A673 (cell line): ENCODE measurements at regions of chr22 and their contacts with region 1.

Region 1: GRCh38 chr22:16917144-16918003 is 90.6 kb downstream of the GAB4 start:
- DNase-seq: peak; percentile 78
- H3K4me3 ChIP-seq: no peak overlapping the region
- H3K27ac ChIP-seq: no peak overlapping the region
- H3K4me1 ChIP-seq: no peaks in the 10 kb centered on the region
- H3K27me3 ChIP-seq: peaks cover 31% of the 10 kb centered on the region
- CTCF ChIP-seq: peak; percentile 82

Region 2: GRCh38 chr22:16955678-16956210 is 38.4 kb after region 1 on chr22:
- CTCF ChIA-PET with region 1: no interaction called
- POLR2A ChIA-PET with region 1: no interaction called
- intact Hi-C with region 1: loop called (anchors 5 kb)
- DNase-seq: no peak
- H3K4me3 ChIP-seq: no peak overlapping the region
- H3K27ac ChIP-seq: no peak overlapping the region
- H3K4me1 ChIP-seq: no peaks in the 10 kb centered on the region
- H3K27me3 ChIP-seq: no peaks in the 10 kb centered on the region
- CTCF ChIP-seq: no peak

Region 3: GRCh38 chr22:17057959-17058814 is 140.8 kb after region 1 on chr22:
- CTCF ChIA-PET with region 1: interaction called, 22 read pairs
- POLR2A ChIA-PET with region 1: no interaction called
- intact Hi-C with region 1: loop called (anchors 1 kb)
- DNase-seq: peak; percentile 68
- H3K4me3 ChIP-seq: no peak overlapping the region
- H3K27ac ChIP-seq: no peak overlapping the region
- H3K4me1 ChIP-seq: no peaks in the 10 kb centered on the region
- H3K27me3 ChIP-seq: no peaks in the 10 kb centered on the region
- CTCF ChIP-seq: peak; percentile 94